Colonic mucosa (tissue), 4 donors: ENCODE measurements at regions of chr16 and their contacts with region 1.

Region 1: GRCh38 chr16:55494994-55495421 is 13.9 kb upstream of the LPCAT2 start:
- DNase-seq: peak; percentile 61
- H3K4me3 ChIP-seq: no peak overlapping the region
- H3K27ac ChIP-seq: no peak overlapping the region
- H3K4me1 ChIP-seq: no peaks in the 10 kb centered on the region
- H3K27me3 ChIP-seq: no peaks in the 10 kb centered on the region
- CTCF ChIP-seq: no peak

Region 2: DNA sequence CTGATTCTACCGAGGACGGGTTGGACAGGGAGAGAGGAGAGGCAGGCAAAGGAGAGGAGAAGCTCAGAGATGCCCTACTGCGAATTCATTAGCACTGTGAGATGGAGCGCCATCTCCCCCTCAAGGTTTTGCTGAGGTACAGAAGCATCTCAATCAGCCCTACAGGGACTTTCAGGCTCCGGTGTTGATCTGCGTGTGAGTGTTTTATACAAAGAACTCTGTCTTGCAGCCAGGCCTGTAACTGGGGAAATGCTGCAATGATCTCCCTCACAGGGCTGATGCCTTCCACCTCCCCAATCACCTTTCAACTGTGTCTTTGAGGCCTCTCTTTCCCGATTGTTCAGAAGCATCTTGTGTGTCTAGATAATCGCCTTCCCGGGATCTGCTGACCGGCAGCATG is 96.2 kb before region 1 on chr16:
- intact Hi-C with region 1: no loop called
- DNase-seq: no peak
- H3K4me3 ChIP-seq: no peak overlapping the region
- H3K27ac ChIP-seq: no peak overlapping the region
- H3K4me1 ChIP-seq: no peaks in the 10 kb centered on the region
- H3K27me3 ChIP-seq: no peaks in the 10 kb centered on the region
- CTCF ChIP-seq: no peak

Region 3: GRCh38 chr16:55643161-55643970 is 148.4 kb after region 1 on chr16:
- intact Hi-C with region 1: loop called (anchors 5 kb)
- DNase-seq: no peak
- H3K4me3 ChIP-seq: no peak overlapping the region
- H3K27ac ChIP-seq: no peak overlapping the region
- H3K4me1 ChIP-seq: no peaks in the 10 kb centered on the region
- H3K27me3 ChIP-seq: no peaks in the 10 kb centered on the region
- CTCF ChIP-seq: no peak